ENCODE measurements at regions of chrX and their contacts with region 1.

Region 1: DNA sequence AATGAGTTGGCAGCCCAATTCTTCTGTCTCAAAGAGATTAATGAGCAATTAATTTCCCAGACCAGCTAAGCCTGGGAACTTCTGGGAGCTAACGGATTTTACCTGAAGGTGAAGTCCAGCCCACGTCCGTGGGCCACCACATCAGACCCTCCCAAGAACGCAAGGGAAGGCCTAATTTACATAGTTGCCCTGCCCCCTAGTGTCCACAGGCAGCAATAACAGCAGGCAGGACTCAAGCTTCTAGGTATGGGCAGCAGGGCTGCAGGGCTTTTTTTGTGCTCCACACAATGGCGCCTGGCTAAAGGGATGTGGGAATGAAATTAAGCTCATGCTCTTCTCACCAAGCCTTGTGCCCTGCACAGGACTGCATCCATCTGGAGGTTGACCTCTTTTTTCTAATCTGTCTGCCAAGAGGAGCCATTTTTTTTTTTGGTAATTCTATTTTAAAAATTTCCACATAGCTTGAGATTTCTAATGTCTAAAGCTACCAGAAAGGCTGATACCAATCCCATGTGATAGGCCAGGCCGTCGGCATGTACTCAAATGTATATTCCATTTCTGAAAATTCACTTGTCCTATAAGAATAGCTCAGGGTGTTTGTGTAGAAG is 111.9 kb upstream of the TMEM164 start:
- DNase-seq: peak; percentile 59
- H3K4me3 Mint-ChIP-seq: no peak overlapping the region
- H3K27ac Mint-ChIP-seq: no peak overlapping the region
- H3K4me1 Mint-ChIP-seq: no peaks in the 10 kb centered on the region
- H3K27me3 Mint-ChIP-seq: peaks cover 3% of the 10 kb centered on the region

Region 2: GRCh38 chrX:109475174-109475891 is 415.7 kb before region 1 on chrX:
- CTCF ChIA-PET with region 1: interaction called, 7 read pairs
- intact Hi-C with region 1: loop called (anchors 5 kb)
- DNase-seq: peak; percentile 34
- H3K4me3 Mint-ChIP-seq: no peak overlapping the region
- H3K27ac Mint-ChIP-seq: no peak overlapping the region
- H3K4me1 Mint-ChIP-seq: peaks cover 7% of the 10 kb centered on the region
- H3K27me3 Mint-ChIP-seq: no peaks in the 10 kb centered on the region

Region 3: GRCh38 chrX:109485470-109486340 is 405.3 kb before region 1 on chrX:
- CTCF ChIA-PET with region 1: interaction called, 16 read pairs
- intact Hi-C with region 1: loop called (anchors 1 kb)
- DNase-seq: peak; percentile 74
- H3K4me3 Mint-ChIP-seq: no peak overlapping the region
- H3K27ac Mint-ChIP-seq: no peak overlapping the region
- H3K4me1 Mint-ChIP-seq: no peaks in the 10 kb centered on the region
- H3K27me3 Mint-ChIP-seq: peaks cover 4% of the 10 kb centered on the region

Region 4: GRCh38 chrX:109635176-109635575 is 255.8 kb before region 1 on chrX:
- CTCF ChIA-PET with region 1: interaction called, 4 read pairs
- intact Hi-C with region 1: loop called (anchors 5 kb)
- DNase-seq: no peak
- H3K4me3 Mint-ChIP-seq: no peak overlapping the region
- H3K27ac Mint-ChIP-seq: no peak overlapping the region
- H3K4me1 Mint-ChIP-seq: no peaks in the 10 kb centered on the region
- H3K27me3 Mint-ChIP-seq: no peaks in the 10 kb centered on the region

Region 5: DNA sequence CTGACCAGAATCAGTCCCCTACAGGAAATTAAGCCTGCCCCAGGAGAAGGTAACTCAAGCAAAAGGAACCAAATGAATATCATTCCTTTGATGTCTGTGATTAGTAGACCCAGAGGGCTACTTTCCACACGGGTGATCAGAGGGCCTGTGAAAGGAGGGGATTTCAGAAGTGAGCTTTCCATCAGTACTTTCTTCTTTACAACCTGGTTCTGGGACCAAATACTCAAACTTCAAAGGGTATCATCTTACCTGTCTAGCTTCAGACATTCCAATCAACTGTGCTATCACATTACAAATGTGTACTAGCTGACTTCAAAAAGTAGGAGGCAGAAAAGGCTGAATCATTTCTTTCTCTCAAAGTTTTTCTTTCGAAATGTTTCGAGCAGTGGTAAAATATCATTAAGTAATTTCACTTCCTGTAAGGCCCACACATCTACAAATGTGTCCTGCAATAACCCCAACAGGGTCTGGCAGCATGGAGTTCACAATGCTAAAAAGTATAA is 181.8 kb before region 1 on chrX:
- CTCF ChIA-PET with region 1: interaction called, 11 read pairs
- intact Hi-C with region 1: loop called (anchors 1 kb)
- DNase-seq: peak; percentile 10
- H3K4me3 Mint-ChIP-seq: no peak overlapping the region
- H3K27ac Mint-ChIP-seq: peak overlapping the region; percentile 71
- H3K4me1 Mint-ChIP-seq: peaks cover 75% of the 10 kb centered on the region
- H3K27me3 Mint-ChIP-seq: no peaks in the 10 kb centered on the region

Region 6: DNA sequence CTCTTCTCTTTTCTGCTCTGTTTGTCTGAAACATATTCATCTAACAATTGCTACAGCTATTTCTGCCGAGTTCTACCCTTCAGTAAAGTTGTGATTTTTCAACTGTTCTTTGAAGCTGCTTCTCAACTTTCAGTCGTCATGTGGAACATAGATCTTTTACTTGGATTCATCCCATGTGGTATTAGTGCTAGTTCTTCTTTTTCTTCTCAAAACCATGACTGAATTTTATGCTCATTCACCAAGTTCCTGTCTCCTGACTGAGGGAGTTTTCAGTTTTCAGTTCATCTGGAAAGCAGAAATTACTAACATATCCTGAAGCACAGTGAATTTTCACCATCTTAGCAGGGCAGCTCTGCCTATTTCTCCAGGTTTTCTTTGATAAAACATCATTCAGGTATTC is 170.1 kb before region 1 on chrX:
- CTCF ChIA-PET with region 1: no interaction called
- intact Hi-C with region 1: no loop called
- DNase-seq: no peak
- H3K4me3 Mint-ChIP-seq: no peak overlapping the region
- H3K27ac Mint-ChIP-seq: no peak overlapping the region
- H3K4me1 Mint-ChIP-seq: peaks cover 42% of the 10 kb centered on the region
- H3K27me3 Mint-ChIP-seq: no peaks in the 10 kb centered on the region

Region 7: DNA sequence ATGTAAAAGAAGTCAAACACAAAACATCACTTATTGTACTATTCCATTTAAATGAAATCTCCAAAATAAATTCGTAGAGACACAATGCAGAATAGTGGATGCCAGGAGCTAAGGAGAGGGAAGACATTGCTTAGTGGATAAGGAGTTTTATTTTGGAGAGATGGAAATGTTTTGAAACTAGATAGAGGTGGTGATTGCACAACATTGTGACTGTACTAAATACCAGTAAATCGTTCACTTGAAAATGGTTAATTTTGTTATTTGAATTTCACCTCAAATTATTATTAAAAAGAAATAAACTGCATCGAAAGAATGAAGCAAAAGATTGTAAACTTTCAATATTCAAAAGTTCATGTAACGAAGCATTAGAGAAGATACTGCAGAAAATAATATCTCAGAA is 148.3 kb before region 1 on chrX:
- CTCF ChIA-PET with region 1: no interaction called
- intact Hi-C with region 1: no loop called
- DNase-seq: no peak
- H3K4me3 Mint-ChIP-seq: no peak overlapping the region
- H3K27ac Mint-ChIP-seq: no peak overlapping the region
- H3K4me1 Mint-ChIP-seq: no peaks in the 10 kb centered on the region
- H3K27me3 Mint-ChIP-seq: no peaks in the 10 kb centered on the region

Region 8: GRCh38 chrX:109856974-109857373 is 34.0 kb before region 1 on chrX:
- CTCF ChIA-PET with region 1: interaction called, 10 read pairs
- intact Hi-C with region 1: no loop called
- DNase-seq: peak; percentile 15
- H3K4me3 Mint-ChIP-seq: no peak overlapping the region
- H3K27ac Mint-ChIP-seq: no peak overlapping the region
- H3K4me1 Mint-ChIP-seq: no peaks in the 10 kb centered on the region
- H3K27me3 Mint-ChIP-seq: no peaks in the 10 kb centered on the region

Region 9: GRCh38 chrX:110412971-110413721 is 522.1 kb after region 1 on chrX:
- CTCF ChIA-PET with region 1: no interaction called
- intact Hi-C with region 1: loop called (anchors 10 kb)
- DNase-seq: peak; percentile 77
- H3K4me3 Mint-ChIP-seq: no peak overlapping the region
- H3K27ac Mint-ChIP-seq: no peak overlapping the region
- H3K4me1 Mint-ChIP-seq: peaks cover 5% of the 10 kb centered on the region
- H3K27me3 Mint-ChIP-seq: no peaks in the 10 kb centered on the region